ENCODE measurements at regions of chr5 and their contacts with region 1.

Region 1: GRCh38 chr5:139968547-139969261 is 74.4 kb downstream of the NRG2 start:
- DNase-seq: peak; percentile 89
- ATAC-seq: peak; percentile 100
- H3K4me3 ChIP-seq: no peak overlapping the region
- H3K27ac ChIP-seq: no peak overlapping the region
- H3K4me1 ChIP-seq: no peaks in the 10 kb centered on the region
- H3K27me3 ChIP-seq: no peaks in the 10 kb centered on the region
- CTCF ChIP-seq: peak; percentile 100
- POLR2A ChIP-seq: no peak

Region 2: GRCh38 chr5:139061274-139061673 is 907.4 kb before region 1 on chr5:
- intact Hi-C with region 1: no loop called
- DNase-seq: peak; percentile 88 to 89 (median 88)
- ATAC-seq: peak; percentile 84 to 94 (median 92)
- H3K4me3 ChIP-seq: no peak overlapping the region
- H3K27ac ChIP-seq: peak overlapping the region; percentile 45 to 61 (median 51)
- H3K4me1 ChIP-seq: peaks cover 0 to 29% (median 10%) of the 10 kb centered on the region in 4 donors
- H3K27me3 ChIP-seq: no peaks in the 10 kb centered on the region
- CTCF ChIP-seq: no peak
- POLR2A ChIP-seq: no peak

Region 3: GRCh38 chr5:139849942-139850341 is 118.8 kb before region 1 on chr5:
- intact Hi-C with region 1: loop called in 1 of 2 experiments (anchors 10 kb)
- DNase-seq: no peak
- ATAC-seq: peak in 1 of 4 donors; percentile 35
- H3K4me3 ChIP-seq: no peak overlapping the region
- H3K27ac ChIP-seq: no peak overlapping the region
- H3K4me1 ChIP-seq: peaks cover 0 to 5% (median 0%) of the 10 kb centered on the region in 4 donors
- H3K27me3 ChIP-seq: no peaks in the 10 kb centered on the region
- CTCF ChIP-seq: no peak
- POLR2A ChIP-seq: no peak

Region 4: DNA sequence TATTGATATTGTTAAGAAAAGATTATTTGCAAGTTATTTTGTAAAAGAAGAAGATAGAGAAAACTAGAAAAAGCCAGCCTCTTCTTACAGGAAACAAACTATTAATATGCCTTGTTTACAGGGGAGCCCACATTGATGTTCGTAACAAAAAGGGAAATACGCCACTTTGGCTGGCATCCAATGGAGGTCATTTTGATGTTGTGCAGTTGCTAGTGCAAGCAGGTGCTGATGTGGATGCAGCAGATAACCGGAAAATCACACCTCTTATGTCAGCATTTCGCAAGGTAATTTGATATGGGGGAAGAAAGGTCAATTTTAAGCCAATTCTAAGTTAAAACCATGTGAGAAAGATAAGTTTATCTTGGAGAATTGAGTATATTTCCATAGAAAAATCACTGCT is 541.2 kb after region 1 on chr5:
- intact Hi-C with region 1: no loop called
- DNase-seq: peak in 1 of 3 donors; percentile 39
- ATAC-seq: peak in 2 of 4 donors; percentile 35 to 66
- H3K4me3 ChIP-seq: no peak overlapping the region
- H3K27ac ChIP-seq: no peak overlapping the region
- H3K4me1 ChIP-seq: peaks cover 0 to 18% (median 0%) of the 10 kb centered on the region in 4 donors
- H3K27me3 ChIP-seq: no peaks in the 10 kb centered on the region
- CTCF ChIP-seq: no peak
- POLR2A ChIP-seq: no peak

Region 5: GRCh38 chr5:140700177-140701144 is 731.8 kb after region 1 on chr5 and contains the start of gene ZMAT2:
- intact Hi-C with region 1: no loop called
- DNase-seq: peak; percentile 92 to 96 (median 96)
- ATAC-seq: peak; percentile 97 to 100 (median 99)
- H3K4me3 ChIP-seq: peak within 1 kb of the TSS; percentile 75 to 90 (median 76)
- H3K27ac ChIP-seq: peak within 1 kb of the TSS; percentile 40 to 64 (median 41)
- H3K4me1 ChIP-seq: peaks cover 0 to 4% (median 0%) of the 10 kb centered on the region in 4 donors
- H3K27me3 ChIP-seq: no peaks in the 10 kb centered on the region
- CTCF ChIP-seq: no peak
- POLR2A ChIP-seq: peak; percentile 56
- total RNA-seq, gene ZMAT2: 11.6 to 26.4 (median 18.0) TPM

Measured in right lobe of liver (tissue), 6 donors.